ENCODE measurements at regions of chr20 and their contacts with region 1.

Region 1: GRCh38 chr20:1304710-1305515 is 24.0 kb downstream of the SDCBP2 start:
- DNase-seq: no peak
- H3K4me3 ChIP-seq: no peak overlapping the region
- H3K27ac ChIP-seq: no peak overlapping the region
- H3K4me1 ChIP-seq: no peaks in the 10 kb centered on the region
- H3K27me3 ChIP-seq: no peaks in the 10 kb centered on the region
- CTCF ChIP-seq: no peak

Region 2: DNA sequence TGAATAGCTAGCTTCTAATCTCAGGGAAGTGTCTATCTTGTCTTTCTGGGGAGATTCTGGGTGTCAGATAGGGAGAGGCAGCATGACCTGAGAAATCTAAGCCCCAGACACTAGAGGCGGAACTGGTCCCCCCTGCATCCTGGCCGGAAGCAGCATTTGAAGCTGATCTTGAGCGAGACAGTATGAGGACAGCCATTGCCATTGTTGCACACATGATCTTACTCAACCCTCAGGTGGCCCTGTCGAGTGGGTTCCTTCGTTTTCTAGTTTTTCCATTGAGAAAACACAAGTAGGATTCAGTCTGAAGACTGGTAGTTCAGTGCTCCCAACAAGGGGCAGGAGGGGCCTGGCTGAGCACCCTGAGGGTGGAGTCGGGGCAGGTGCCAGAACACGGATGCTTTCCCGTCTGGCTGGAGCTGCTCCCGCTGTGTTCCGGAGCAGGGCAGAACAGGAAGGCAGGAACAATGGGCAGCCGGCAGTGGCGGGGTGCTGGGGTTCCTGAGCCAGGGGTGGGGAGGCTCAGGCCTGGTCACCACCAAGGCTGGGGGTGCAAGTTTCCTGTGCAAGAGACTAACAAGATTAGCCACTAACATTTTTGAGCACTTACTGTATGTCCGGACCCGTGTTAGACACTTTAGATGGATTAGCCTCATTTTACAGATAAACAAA is 31.9 kb after region 1 on chr20:
- intact Hi-C with region 1: no loop called
- DNase-seq: peak in 1 of 2 donors; percentile 78
- H3K4me3 ChIP-seq: peak overlapping the region in 1 of 2 donors; percentile 42
- H3K27ac ChIP-seq: peak overlapping the region; percentile 41 to 42
- H3K4me1 ChIP-seq: no peaks in the 10 kb centered on the region
- H3K27me3 ChIP-seq: no peaks in the 10 kb centered on the region
- CTCF ChIP-seq: no peak

Region 3: GRCh38 chr20:1427457-1428054 is 122.6 kb after region 1 on chr20:
- intact Hi-C with region 1: loop called (anchors 2 kb)
- DNase-seq: no peak
- H3K4me3 ChIP-seq: no peak overlapping the region
- H3K27ac ChIP-seq: no peak overlapping the region
- H3K4me1 ChIP-seq: no peaks in the 10 kb centered on the region
- H3K27me3 ChIP-seq: no peaks in the 10 kb centered on the region
- CTCF ChIP-seq: no peak